ENCODE measurements at regions of chr2 and their contacts with region 1.

Region 1: DNA sequence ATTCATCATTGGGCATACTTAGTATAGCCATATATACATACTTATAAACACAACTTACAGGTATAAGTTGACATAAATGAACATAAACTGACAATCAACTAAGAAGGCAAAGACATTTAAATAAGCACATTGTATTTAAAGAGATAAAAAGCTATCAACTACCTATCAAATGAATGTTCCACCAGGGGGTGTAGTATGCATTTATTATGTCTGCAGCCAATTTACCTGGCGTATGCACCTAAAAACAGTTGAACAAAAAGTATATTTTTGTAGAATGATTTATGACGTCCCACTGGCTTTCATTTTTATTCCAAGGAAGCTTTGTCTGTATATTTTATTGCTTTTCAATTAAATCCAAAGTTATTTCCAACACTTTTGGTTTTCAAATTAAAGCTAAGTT is 323.5 kb downstream of the AFF3 start:
- DNase-seq: peak; percentile 10
- ATAC-seq: no peak
- H3K4me3 ChIP-seq: no peak overlapping the region
- H3K27ac ChIP-seq: no peak overlapping the region
- H3K4me1 ChIP-seq: no peaks in the 10 kb centered on the region
- H3K27me3 ChIP-seq: no peaks in the 10 kb centered on the region; a peak in 1 of 5 replicates
- CTCF ChIP-seq: 0 out of 2 replicates have a peak, but pooled peaks have one; percentile 13
- EP300 ChIP-seq: no peak
- POLR2A ChIP-seq: no peak
- RAD21 ChIP-seq: no peak

Region 2: DNA sequence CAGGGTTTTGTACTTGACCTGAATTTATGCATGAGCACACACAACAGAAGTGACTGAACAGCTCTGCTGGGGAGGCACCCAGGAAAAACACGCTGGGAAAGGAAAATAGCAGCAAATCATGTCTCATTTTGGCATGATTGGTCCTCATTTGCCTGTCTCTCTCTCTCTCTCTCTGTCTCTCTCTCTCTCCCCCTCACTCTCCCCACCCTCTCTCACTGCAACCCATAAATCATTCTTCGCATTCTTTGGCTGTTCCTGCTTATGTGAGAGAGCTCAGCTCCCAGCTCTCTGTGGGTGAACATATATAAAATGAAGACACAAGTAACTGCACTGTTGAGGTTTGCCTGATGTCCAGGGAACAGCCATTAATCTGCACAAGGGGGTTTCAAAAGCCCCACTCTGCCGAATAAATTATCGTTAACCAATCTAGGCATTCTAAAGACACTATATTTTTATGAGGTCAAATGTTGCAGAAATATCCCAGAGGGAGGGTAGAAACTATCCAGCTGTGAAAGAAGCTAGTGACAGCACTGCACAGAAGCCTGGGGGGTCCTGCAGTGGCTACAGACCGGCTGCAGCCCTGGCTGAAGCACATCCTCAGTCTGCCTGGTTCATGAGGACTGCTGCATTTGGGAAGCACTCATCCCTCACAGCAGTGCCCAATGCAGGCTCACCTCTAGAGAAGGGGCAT is 63.2 kb after region 1 on chr2:
- CTCF ChIA-PET with region 1: no interaction called
- POLR2A ChIA-PET with region 1: no interaction called
- in situ Hi-C with region 1: no loop called
- intact Hi-C with region 1: no loop called
- DNase-seq: no peak
- ATAC-seq: no peak
- H3K4me3 ChIP-seq: no peak overlapping the region
- H3K27ac ChIP-seq: no peak overlapping the region
- H3K4me1 ChIP-seq: no peaks in the 10 kb centered on the region
- H3K27me3 ChIP-seq: peaks cover 1 to 3% of the 10 kb centered on the region in 2 experiments; a peak in 1 of 5 replicates
- CTCF ChIP-seq: no peak
- EP300 ChIP-seq: no peak
- POLR2A ChIP-seq: no peak
- RAD21 ChIP-seq: no peak

Region 3: DNA sequence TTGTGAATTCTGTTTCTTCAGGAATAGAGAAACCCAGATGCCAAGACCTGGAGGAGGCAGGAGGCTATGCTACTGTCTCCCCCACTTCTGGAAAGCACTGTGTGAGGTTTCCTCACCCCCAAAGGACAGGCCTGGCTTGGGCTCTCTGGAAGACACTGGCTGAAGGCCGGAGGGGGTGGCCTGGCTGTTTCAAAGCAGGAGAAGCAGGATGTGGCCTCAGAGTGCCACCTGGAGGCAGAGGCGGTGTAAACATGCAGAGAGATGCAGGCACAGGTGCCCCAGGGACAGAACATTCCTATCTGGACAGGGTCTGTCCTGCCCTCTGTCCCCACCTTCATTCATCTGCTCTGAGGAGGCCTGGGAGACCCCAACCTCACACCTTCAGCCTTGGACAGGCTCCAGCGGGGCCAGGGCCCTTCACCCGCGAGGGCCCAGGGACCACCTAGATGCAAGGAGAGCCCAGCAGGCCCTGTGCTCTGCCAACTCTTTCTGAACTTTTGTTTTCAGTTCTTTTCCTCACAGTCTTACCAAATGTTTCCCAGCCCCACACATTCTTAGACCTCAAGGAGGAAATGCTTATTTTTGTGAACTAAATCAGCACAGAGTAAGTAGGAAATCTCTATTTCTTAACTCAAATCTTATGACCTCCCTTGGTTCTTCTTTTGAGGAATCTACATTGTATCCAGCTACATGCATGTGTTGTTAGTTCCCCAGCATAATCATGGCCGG is 424.2 kb after region 1 on chr2:
- CTCF ChIA-PET with region 1: interaction called, 16 read pairs
- POLR2A ChIA-PET with region 1: no interaction called
- in situ Hi-C with region 1: loop called (anchors 10 kb)
- intact Hi-C with region 1: loop called (anchors 1 kb)
- DNase-seq: peak; percentile 45
- ATAC-seq: peak; percentile 93
- H3K4me3 ChIP-seq: no peak overlapping the region
- H3K27ac ChIP-seq: no peak overlapping the region
- H3K4me1 ChIP-seq: no peaks in the 10 kb centered on the region
- H3K27me3 ChIP-seq: peaks cover 0 to 16% of the 10 kb centered on the region in 2 experiments; a peak in 3 of 5 replicates
- CTCF ChIP-seq: peak; percentile 97
- EP300 ChIP-seq: no peak
- POLR2A ChIP-seq: no peak
- RAD21 ChIP-seq: peak; percentile 94

Region 4: GRCh38 chr2:100262555-100263320 is 443.9 kb after region 1 on chr2:
- CTCF ChIA-PET with region 1: no interaction called
- POLR2A ChIA-PET with region 1: no interaction called
- in situ Hi-C with region 1: no loop called
- intact Hi-C with region 1: loop called (anchors 5 kb)
- DNase-seq: peak; percentile 41
- ATAC-seq: peak; percentile 70
- H3K4me3 ChIP-seq: no peak overlapping the region
- H3K27ac ChIP-seq: no peak overlapping the region
- H3K4me1 ChIP-seq: no peaks in the 10 kb centered on the region
- H3K27me3 ChIP-seq: peaks cover 0 to 4% of the 10 kb centered on the region in 2 experiments; a peak in 2 of 5 replicates
- CTCF ChIP-seq: peak; percentile 91
- EP300 ChIP-seq: no peak
- POLR2A ChIP-seq: no peak
- RAD21 ChIP-seq: peak; percentile 80